Activated B cell treated with CpG ODN at 0.5 μM for 24 hours (primary cell): ENCODE measurements at regions of chr10 and their contacts with region 1.

Region 1: DNA sequence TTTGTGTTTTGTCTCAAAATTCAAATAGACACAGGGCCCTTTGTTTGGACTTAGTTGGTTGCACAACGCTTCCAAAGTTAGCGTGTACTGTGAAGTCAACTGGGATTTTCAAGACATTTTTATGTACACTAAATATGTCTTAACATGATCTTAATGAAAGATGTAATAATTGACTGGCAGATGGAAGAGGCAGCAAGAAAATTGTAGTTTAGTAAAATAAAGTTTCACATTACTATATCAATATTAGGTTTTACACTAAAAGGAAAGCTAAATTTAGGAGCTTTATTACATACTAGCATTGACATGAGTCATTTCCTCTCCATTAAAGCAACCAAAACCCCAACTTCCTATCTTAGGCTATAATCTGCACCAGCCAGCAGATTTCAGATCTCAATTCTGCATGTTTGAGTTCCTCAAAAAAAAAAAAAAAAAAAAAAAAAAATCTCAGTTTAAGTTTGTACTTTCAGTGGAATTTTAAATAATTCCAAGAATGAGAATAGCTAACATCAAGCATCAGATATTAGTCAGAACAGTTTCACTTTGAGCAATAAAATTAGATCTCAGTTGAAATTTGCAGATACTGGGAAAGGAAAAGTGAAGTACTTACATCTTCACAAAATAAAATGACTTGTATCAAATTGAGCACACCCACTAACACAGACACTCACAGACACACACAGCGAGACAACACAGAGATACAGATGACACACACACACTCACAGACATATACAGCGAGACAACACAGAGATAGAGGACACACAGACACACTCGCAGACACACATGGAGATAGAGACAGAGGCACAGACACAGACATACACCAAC is 346.6 kb upstream of the KLF6 start:
- DNase-seq: no peak
- ATAC-seq: peak; percentile 75
- H3K4me3 Mint-ChIP-seq: no peak overlapping the region
- H3K27ac Mint-ChIP-seq: no peak overlapping the region
- H3K4me1 Mint-ChIP-seq: peaks cover 35% of the 10 kb centered on the region
- H3K27me3 Mint-ChIP-seq: no peaks in the 10 kb centered on the region
- CTCF ChIP-seq: no peak

Region 2: GRCh38 chr10:3873728-3874461 is 257.7 kb before region 1 on chr10:
- CTCF ChIA-PET with region 1: no interaction called
- POLR2A ChIA-PET with region 1: interaction called, 10 read pairs
- intact Hi-C with region 1: loop called (anchors 1 kb)
- DNase-seq: no peak
- ATAC-seq: peak; percentile 43
- H3K4me3 Mint-ChIP-seq: peak overlapping the region; percentile 45
- H3K27ac Mint-ChIP-seq: peak overlapping the region; percentile 96
- H3K4me1 Mint-ChIP-seq: peaks cover 60% of the 10 kb centered on the region
- H3K27me3 Mint-ChIP-seq: no peaks in the 10 kb centered on the region
- CTCF ChIP-seq: no peak

Region 3: GRCh38 chr10:4013651-4014121 is 117.9 kb before region 1 on chr10:
- CTCF ChIA-PET with region 1: no interaction called
- POLR2A ChIA-PET with region 1: interaction called, 6 read pairs
- intact Hi-C with region 1: loop called (anchors 5 kb)
- DNase-seq: peak; percentile 32
- ATAC-seq: peak; percentile 81
- H3K4me3 Mint-ChIP-seq: peak overlapping the region; percentile 53
- H3K27ac Mint-ChIP-seq: peak overlapping the region; percentile 83
- H3K4me1 Mint-ChIP-seq: peaks cover 33% of the 10 kb centered on the region
- H3K27me3 Mint-ChIP-seq: no peaks in the 10 kb centered on the region
- CTCF ChIP-seq: no peak

Region 4: DNA sequence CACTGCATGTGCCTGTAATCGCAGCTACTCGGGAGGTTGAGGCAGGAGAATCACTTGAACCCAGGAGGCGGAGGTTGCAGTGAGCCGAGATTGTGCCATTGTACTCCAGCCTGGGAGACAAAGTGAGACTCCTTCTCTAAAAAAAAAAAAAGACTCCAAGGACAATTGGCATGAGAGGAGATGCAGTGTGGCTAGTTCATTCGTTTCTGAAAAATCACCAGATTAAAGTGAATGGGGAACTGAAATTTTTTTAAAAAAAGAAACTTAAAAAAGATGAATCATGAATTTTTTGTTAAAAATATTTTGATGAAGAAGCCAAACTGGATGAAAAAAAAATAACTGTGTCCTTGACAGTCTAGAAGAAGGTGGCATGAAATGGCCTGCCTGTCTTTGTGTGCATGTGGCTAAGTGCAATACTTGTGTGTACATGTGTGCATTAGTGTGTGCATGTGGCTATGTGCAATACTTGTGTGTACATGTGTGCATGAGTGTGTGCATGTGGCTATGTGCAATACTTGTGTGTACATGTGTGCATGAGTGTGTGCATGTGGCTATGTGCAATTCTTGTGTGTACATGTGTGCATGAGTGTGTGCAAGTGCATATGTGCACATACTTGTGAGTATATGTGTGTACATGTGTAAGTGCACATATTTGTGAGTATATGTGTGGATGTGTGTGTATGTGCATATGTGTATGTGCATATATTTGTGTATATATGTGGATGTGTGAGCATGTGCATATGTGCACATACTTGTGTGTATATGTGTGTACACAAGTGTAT is 45.1 kb after region 1 on chr10:
- CTCF ChIA-PET with region 1: no interaction called
- POLR2A ChIA-PET with region 1: no interaction called
- intact Hi-C with region 1: loop called (anchors 5 kb)
- DNase-seq: no peak
- ATAC-seq: no peak
- H3K4me3 Mint-ChIP-seq: peak overlapping the region; percentile 64
- H3K27ac Mint-ChIP-seq: no peak overlapping the region
- H3K4me1 Mint-ChIP-seq: peaks cover 28% of the 10 kb centered on the region
- H3K27me3 Mint-ChIP-seq: no peaks in the 10 kb centered on the region
- CTCF ChIP-seq: no peak

Region 5: GRCh38 chr10:4333459-4333894 is 201.9 kb after region 1 on chr10:
- CTCF ChIA-PET with region 1: no interaction called
- POLR2A ChIA-PET with region 1: no interaction called
- intact Hi-C with region 1: loop called (anchors 1 kb)
- DNase-seq: no peak
- ATAC-seq: peak; percentile 28
- H3K4me3 Mint-ChIP-seq: no peak overlapping the region
- H3K27ac Mint-ChIP-seq: no peak overlapping the region
- H3K4me1 Mint-ChIP-seq: no peaks in the 10 kb centered on the region
- H3K27me3 Mint-ChIP-seq: no peaks in the 10 kb centered on the region
- CTCF ChIP-seq: no peak